ENCODE measurements at regions of chr9 and their contacts with region 1.

Region 1: DNA sequence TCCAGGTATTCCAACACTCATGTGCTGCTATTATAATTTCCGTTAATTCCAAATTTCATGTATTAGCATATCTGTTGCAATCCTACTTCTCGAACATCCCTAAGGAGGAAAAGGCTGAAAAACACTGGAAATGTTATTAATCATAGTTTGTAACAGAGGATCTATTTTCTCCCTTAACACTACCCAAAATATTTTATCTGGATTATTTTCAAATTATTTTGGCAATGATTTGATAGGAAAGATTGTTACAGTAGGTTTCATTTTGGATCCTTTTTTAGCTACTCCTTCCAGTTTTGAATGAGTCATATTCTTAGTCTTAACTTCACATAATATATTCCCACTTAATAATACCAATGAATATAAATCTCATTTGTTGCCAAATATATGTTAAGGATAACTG is 13.9 kb upstream of the NAA35 start:
- DNase-seq: no peak
- H3K4me3 ChIP-seq: no peak overlapping the region
- H3K27ac ChIP-seq: no peak overlapping the region
- H3K4me1 ChIP-seq: no peaks in the 10 kb centered on the region
- H3K27me3 ChIP-seq: no peaks in the 10 kb centered on the region
- CTCF ChIP-seq: no peak
- EP300 ChIP-seq: no peak
- POLR2A ChIP-seq: no peak

Region 2: GRCh38 chr9:84139296-84140070 is 1787.6 kb before region 1 on chr9:
- in situ Hi-C with region 1: no loop called
- intact Hi-C with region 1: loop called (anchors 5 kb)
- DNase-seq: peak; percentile 73
- H3K4me3 ChIP-seq: no peak overlapping the region
- H3K27ac ChIP-seq: peak overlapping the region; percentile 42 to 69 (median 66)
- H3K4me1 ChIP-seq: peaks cover 5 to 37% (median 22%) of the 10 kb centered on the region in 4 donors
- H3K27me3 ChIP-seq: peaks cover 36% of the 10 kb centered on the region
- CTCF ChIP-seq: no peak
- EP300 ChIP-seq: no peak
- POLR2A ChIP-seq: no peak